Left cardiac atrium (tissue), 4 donors: ENCODE measurements at regions of chr11 and their contacts with region 1.

Region 1: DNA sequence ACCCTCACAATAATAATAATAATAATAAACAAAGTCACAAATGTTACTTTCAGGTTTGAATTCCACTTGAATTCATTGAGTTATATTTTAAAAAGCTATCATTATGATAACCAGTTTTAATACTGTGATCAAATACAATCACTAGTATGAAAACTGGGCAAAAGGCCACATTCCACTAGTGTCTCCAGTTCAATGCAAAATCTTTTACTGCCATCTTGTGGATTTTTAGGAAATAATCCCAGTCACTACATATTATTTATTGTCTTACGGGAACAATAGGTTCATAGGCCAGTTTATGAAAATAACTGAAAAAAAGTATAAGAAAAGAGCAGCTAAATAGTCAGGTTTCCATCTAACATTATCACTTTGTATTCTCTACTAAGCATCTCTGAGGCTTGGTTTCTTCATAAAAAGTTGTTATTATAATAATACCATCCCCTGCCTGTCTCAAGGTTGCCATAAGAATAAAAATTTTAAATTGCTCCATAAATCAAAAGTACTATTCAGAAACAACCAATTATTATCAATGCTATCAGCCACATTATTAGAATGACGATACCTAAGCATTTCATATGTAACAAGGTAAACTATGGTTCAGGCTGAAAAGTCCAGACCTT is 533.9 kb upstream of the CCDC90B start:
- DNase-seq: no peak
- ATAC-seq: peak; percentile 59

Region 2: DNA sequence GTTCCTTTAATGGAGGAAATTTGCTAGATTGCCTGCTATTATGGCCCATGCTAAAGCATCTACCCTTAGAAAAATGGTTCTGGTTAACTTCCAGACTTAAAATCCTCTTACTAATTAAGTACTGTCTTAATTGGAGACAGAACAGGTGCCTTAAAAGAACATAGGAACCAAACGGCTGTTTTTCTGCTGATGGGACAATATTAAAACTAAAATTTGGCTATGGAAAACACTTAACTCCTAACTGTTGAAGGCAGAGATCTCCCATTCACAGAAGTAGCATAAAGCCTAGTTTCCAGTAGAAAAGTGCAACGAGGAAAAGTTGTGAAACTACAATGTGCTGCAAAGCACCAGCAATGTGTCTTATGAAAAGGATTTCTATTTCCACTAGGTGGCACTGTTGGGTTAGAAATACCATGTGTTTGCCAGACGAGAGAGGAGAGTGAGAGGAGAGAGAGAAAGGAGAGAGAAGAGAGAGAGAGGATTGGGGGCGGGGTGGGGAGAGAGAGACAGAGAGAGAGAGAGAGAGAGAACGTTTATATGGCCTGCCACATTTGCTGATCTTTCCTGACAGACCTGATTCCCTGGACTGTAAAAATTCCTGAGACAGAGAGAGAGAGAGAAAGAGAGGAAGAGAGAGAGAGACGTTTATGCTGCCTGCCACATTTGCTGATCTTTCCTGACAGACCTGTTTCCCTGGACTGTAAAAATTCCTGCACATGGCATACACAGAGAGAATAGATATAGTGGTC is 1137.9 kb before region 1 on chr11:
- intact Hi-C with region 1: loop called in 1 of 2 experiments (anchors 5 kb)
- DNase-seq: no peak
- ATAC-seq: peak; percentile 85 to 87

Region 3: GRCh38 chr11:83235825-83236224 is 584.2 kb before region 1 on chr11:
- intact Hi-C with region 1: loop called in 1 of 2 experiments (anchors 5 kb)
- DNase-seq: no peak
- ATAC-seq: peak in 1 of 2 donors; percentile 38

Region 4: GRCh38 chr11:83292709-83293456 is 527.2 kb before region 1 on chr11:
- intact Hi-C with region 1: loop called (anchors 5 to 10 kb)
- DNase-seq: no peak
- ATAC-seq: peak; percentile 67 to 80

Region 5: DNA sequence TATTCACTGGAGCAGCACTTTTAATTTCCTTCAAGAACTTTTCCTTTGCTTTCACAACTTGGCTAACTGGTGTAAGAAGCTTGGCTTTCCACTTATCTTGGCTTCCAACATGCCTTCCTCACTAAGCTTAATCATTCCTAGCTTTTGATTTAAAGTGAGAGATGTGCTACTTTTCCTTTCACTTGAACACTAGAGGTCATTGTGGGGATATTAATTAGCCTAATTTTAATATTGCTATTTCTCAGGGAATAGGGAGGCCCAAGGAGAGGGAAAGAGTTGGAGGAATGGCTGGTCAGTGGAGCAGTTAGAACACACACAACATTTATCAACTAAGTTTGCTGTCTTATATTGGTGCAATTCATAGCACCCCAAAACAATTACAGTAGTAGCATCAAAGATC is 509.3 kb before region 1 on chr11:
- intact Hi-C with region 1: loop called in 1 of 2 experiments (anchors 5 kb)
- DNase-seq: no peak
- ATAC-seq: peak in 1 of 2 donors; percentile 30

Region 6: GRCh38 chr11:84130646-84131420 is 310.8 kb after region 1 on chr11:
- intact Hi-C with region 1: no loop called
- DNase-seq: no peak
- ATAC-seq: no peak